ENCODE measurements at regions of chr7 and their contacts with region 1.

Region 1: GRCh38 chr7:84291756-84292155 is 97.2 kb upstream of the SEMA3A start:
- DNase-seq: no peak
- ATAC-seq: no peak
- H3K4me3 ChIP-seq: no peak overlapping the region
- H3K4me3 Mint-ChIP-seq: no peak overlapping the region
- H3K27ac ChIP-seq: no peak overlapping the region
- H3K27ac Mint-ChIP-seq: no peak overlapping the region
- H3K4me1 ChIP-seq: no peaks in the 10 kb centered on the region
- H3K4me1 Mint-ChIP-seq: no peaks in the 10 kb centered on the region
- H3K27me3 ChIP-seq: no peaks in the 10 kb centered on the region
- H3K27me3 Mint-ChIP-seq: peaks cover 3% of the 10 kb centered on the region
- CTCF ChIP-seq: no peak

Region 2: DNA sequence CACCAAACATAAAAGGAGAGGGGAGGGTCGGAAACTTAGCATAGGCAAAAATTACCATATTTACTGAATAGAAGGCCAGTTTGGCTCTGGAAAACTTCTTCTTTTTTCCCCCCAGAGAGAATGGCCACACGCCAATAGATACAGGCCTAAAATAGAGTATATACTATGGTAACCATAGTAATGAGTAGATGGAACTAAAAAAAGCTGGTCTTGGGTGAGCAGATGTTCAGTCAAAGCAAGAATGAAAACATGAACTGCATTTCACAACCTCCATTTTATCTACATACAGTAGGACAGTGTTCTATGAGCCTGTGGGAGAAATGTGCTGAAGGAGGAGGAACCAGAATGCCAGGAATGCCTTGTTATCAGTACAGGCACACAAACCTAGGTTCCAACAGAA is 44.5 kb after region 1 on chr7:
- CTCF ChIA-PET with region 1: no interaction called
- POLR2A ChIA-PET with region 1: no interaction called
- intact Hi-C with region 1: no loop called
- DNase-seq: no peak
- ATAC-seq: no peak
- H3K4me3 ChIP-seq: no peak overlapping the region
- H3K4me3 Mint-ChIP-seq: no peak overlapping the region
- H3K27ac ChIP-seq: no peak overlapping the region
- H3K27ac Mint-ChIP-seq: no peak overlapping the region
- H3K4me1 ChIP-seq: no peaks in the 10 kb centered on the region
- H3K4me1 Mint-ChIP-seq: no peaks in the 10 kb centered on the region
- H3K27me3 ChIP-seq: no peaks in the 10 kb centered on the region
- H3K27me3 Mint-ChIP-seq: no peaks in the 10 kb centered on the region
- CTCF ChIP-seq: no peak

Region 3: DNA sequence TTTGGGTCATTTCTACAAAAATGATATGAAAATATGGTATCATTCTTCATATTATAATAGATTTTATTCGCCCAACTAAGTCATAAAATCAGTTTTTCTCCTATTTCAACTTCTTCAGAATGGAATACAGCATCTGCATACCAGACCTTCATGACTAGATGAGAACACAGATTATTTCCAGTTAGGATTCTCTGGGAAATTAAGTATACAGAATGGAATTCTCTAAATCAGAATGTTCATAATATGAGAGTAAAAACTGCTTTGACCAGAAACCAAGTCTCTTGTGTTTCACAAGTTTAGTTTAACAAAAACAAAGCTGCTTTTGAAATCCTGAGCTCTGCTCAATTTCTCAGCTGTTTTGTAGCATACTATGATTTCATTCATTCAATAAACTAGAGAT is 63.1 kb after region 1 on chr7:
- CTCF ChIA-PET with region 1: no interaction called
- POLR2A ChIA-PET with region 1: no interaction called
- intact Hi-C with region 1: loop called in 1 of 2 experiments (anchors 10 kb)
- DNase-seq: no peak
- ATAC-seq: no peak
- H3K4me3 ChIP-seq: no peak overlapping the region
- H3K4me3 Mint-ChIP-seq: no peak overlapping the region
- H3K27ac ChIP-seq: no peak overlapping the region
- H3K27ac Mint-ChIP-seq: no peak overlapping the region
- H3K4me1 ChIP-seq: no peaks in the 10 kb centered on the region
- H3K4me1 Mint-ChIP-seq: no peaks in the 10 kb centered on the region
- H3K27me3 ChIP-seq: no peaks in the 10 kb centered on the region
- H3K27me3 Mint-ChIP-seq: no peaks in the 10 kb centered on the region
- CTCF ChIP-seq: no peak

Region 4: GRCh38 chr7:84484502-84485079 is 192.8 kb after region 1 on chr7:
- CTCF ChIA-PET with region 1: no interaction called
- POLR2A ChIA-PET with region 1: no interaction called
- intact Hi-C with region 1: no loop called
- DNase-seq: no peak
- ATAC-seq: no peak
- H3K4me3 ChIP-seq: no peak overlapping the region
- H3K4me3 Mint-ChIP-seq: no peak overlapping the region
- H3K27ac ChIP-seq: no peak overlapping the region
- H3K27ac Mint-ChIP-seq: no peak overlapping the region
- H3K4me1 ChIP-seq: no peaks in the 10 kb centered on the region
- H3K4me1 Mint-ChIP-seq: no peaks in the 10 kb centered on the region
- H3K27me3 ChIP-seq: no peaks in the 10 kb centered on the region
- H3K27me3 Mint-ChIP-seq: no peaks in the 10 kb centered on the region
- CTCF ChIP-seq: no peak

Measured in CD4-positive, alpha-beta T cell (primary cell).